PC-3 (cell line): ENCODE measurements at regions of chr1 and their contacts with region 1.

Region 1: GRCh38 chr1:10398734-10399623 is at the start of gene PGD:
- DNase-seq: peak; percentile 98
- ATAC-seq: peak; percentile 92
- H3K4me3 ChIP-seq: peak within 1 kb of the TSS; percentile 95
- H3K27ac ChIP-seq: peak within 1 kb of the TSS; percentile 97
- H3K4me1 ChIP-seq: peaks cover 21% of the 10 kb centered on the region
- H3K27me3 ChIP-seq: no peaks in the 10 kb centered on the region
- CTCF ChIP-seq: no peak
- total RNA-seq, gene PGD: 150 and 162 TPM in 2 replicates

Region 2: GRCh38 chr1:10387413-10388079 is 11.4 kb before region 1 on chr1:
- CTCF ChIA-PET with region 1: interaction called, 3 read pairs
- POLR2A ChIA-PET with region 1: interaction called, 7 read pairs
- intact Hi-C with region 1: loop called (anchors 1 kb)
- DNase-seq: peak; percentile 62
- ATAC-seq: peak; percentile 86
- H3K4me3 ChIP-seq: peak overlapping the region; percentile 43
- H3K27ac ChIP-seq: peak overlapping the region; percentile 96
- H3K4me1 ChIP-seq: peaks cover 22% of the 10 kb centered on the region
- H3K27me3 ChIP-seq: no peaks in the 10 kb centered on the region
- CTCF ChIP-seq: no peak

Region 3: DNA sequence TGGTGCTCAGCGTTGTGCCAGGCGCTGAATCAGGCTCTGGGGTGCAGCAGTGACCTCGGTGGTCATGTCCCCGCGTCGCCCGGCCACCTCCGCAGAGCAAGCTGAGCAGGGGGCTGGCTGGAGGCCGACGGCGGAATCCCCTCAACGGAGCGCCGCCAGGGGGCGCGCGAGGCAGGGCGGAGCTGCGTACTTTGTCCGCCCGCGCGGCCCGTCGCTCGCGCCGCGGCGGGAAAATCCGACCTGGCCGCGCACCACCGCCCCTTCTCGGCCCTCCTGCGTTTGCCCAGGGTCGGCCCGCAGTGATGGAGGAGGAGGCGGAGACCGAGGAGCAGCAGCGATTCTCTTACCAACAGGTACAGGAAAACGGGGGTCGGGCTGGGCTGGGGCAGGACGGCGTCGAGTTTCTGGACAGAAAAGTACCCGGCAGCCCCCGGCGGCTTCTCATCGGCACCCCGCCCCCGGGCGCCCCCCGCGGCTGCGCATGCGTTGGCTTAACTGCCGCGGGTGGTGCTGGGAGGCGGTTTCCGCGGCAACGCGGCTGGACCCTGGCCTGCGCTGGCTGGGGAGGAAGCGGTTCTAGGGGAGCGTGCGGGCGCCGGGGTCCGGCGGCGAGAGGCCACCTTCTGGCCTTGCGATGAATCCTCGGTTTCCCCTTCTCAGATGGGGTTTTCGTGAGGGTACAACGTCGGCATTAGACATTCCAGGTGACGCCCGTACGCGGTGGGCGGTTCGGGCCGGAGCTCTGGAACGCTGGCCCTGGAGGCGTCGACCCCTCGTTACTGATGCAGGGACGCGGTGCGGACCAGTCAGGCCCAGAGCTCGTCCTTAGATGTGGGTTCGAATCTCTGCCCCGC is 31.5 kb after region 1 on chr1 and contains the start of gene CENPS:
- CTCF ChIA-PET with region 1: no interaction called
- POLR2A ChIA-PET with region 1: no interaction called
- intact Hi-C with region 1: no loop called
- DNase-seq: peak; percentile 88
- ATAC-seq: peak; percentile 87
- H3K4me3 ChIP-seq: peak within 1 kb of the TSS; percentile 85
- H3K27ac ChIP-seq: peak within 1 kb of the TSS; percentile 71
- H3K4me1 ChIP-seq: peaks cover 8% of the 10 kb centered on the region; the same call in 1 of the 2 replicates
- H3K27me3 ChIP-seq: no peaks in the 10 kb centered on the region
- CTCF ChIP-seq: peak; percentile 90
- total RNA-seq, gene CENPS: 16.3 and 19.5 TPM in 2 replicates